Pancreas (tissue), 10 donors: ENCODE measurements at regions of chr21 and their contacts with region 1.

Region 1: GRCh38 chr21:44939532-44940115 is at the start of gene SLX9:
- DNase-seq: peak; percentile 65 to 92 (median 80)
- ATAC-seq: peak; percentile 98 to 100 (median 98)
- H3K4me3 ChIP-seq: peak within 1 kb of the TSS; percentile 90 to 98 (median 98)
- H3K27ac ChIP-seq: peak within 1 kb of the TSS in 1 of 4 donors; percentile 27
- H3K4me1 ChIP-seq: peaks cover 6 to 12% (median 6%) of the 10 kb centered on the region in 3 donors
- H3K27me3 ChIP-seq: no peaks in the 10 kb centered on the region
- CTCF ChIP-seq: no peak
- total RNA-seq, gene SLX9: 12.3 to 21.7 (median 14.5) TPM

Region 2: GRCh38 chr21:44637018-44637850 is 302.4 kb before region 1 on chr21 and contains the start of gene KRTAP10-10:
- intact Hi-C with region 1: no loop called
- DNase-seq: no peak
- ATAC-seq: no peak
- H3K4me3 ChIP-seq: no peak within 1 kb of the TSS
- H3K27ac ChIP-seq: no peak within 1 kb of the TSS
- H3K4me1 ChIP-seq: no peaks in the 10 kb centered on the region
- H3K27me3 ChIP-seq: no peaks in the 10 kb centered on the region
- CTCF ChIP-seq: no peak
- total RNA-seq, gene KRTAP10-10: not detected

Region 3: DNA sequence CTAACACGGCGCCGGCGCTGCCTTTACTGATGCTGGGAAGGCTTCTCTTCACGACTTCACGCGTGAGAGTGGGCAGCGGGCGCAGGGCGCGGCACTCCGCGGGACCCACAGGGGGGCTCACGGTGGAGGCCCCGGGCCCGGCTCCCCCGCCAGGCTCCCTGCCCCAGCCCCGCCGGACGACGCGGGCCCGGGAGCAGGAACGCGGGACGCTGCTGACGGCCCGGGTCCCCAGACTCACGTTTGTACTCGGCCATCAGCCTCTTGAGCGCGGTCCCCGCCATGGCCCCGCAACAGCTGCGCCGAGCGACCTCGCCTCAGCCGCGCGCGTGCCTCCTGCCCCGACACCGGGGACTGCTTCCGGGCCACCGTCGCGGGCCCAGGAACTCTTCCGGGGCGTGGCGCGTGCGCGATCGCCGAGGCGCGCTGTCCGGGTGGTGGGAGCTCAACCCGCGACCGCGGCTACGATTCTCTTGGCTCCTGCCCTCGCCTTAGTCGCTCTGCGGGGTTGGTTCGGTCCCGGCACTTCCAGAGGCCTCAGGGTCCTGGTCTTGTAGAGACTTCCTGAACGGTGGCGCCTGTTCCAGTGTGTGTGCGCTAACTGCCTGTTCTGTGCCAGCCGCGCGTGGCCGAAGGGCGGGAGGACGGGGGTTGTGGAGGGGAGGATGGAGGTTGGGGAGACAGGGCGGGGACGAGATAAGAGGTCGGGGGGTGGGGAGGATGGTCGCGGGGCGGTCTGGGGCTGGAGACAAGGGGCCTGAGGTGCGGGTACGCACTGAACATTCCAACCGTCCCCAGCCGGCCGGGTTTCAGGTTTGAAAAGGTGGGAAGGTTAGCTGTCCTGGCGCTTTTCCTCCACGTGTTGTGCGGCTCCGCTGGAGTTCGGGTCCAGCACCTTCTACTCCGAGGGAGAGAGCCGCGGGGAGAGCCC is 137.9 kb before region 1 on chr21 and contains the start of gene UBE2G2:
- intact Hi-C with region 1: loop called in 1 of 3 experiments (anchors 10 kb)
- DNase-seq: peak; percentile 71 to 94 (median 82)
- ATAC-seq: peak; percentile 97 to 98 (median 98)
- H3K4me3 ChIP-seq: peak within 1 kb of the TSS; percentile 70 to 99 (median 85)
- H3K27ac ChIP-seq: peak within 1 kb of the TSS; percentile 44 to 72 (median 56)
- H3K4me1 ChIP-seq: peaks cover 5 to 20% (median 10%) of the 10 kb centered on the region in 3 donors
- H3K27me3 ChIP-seq: no peaks in the 10 kb centered on the region
- CTCF ChIP-seq: no peak
- total RNA-seq, gene UBE2G2: 30.5 to 48.0 (median 39.7) TPM

Region 4: DNA sequence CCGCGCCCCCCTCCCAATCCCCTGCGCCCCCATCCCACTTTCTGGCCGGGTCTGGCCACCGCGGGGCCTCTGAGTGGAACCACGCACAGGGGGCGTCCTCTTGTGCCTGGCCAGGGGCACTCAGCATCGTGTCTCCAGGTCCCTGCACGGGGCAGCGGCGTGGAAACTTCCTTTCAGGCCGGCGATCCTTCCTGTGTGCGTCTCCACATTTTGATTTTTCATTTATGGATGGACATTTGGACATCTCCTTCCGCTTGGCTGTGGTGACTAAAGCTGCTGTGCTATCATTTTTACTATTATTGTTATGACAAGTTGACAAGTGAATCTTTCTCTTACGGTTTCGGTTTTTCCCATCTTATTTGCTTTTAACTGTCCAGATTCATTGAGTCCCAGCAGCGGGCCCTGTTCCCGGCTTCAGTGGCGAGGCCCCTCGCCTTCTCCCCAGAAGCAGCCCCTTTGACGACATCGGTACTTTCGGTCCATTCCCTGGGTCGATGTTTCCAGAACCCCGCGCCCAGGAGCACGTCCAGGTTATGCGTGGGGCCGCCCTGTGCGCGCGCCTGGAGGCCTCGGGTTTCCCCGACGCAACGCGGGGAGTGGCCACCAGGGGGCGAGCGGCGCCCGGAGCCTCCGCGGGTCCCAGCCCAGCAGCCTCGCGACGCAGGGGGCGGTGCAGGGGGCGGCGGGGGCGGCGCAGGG is 615.0 kb after region 1 on chr21:
- intact Hi-C with region 1: no loop called
- DNase-seq: peak; percentile 78 to 99 (median 87)
- ATAC-seq: peak; percentile 71 to 82 (median 76)
- H3K4me3 ChIP-seq: peak overlapping the region; percentile 2 to 50 (median 42)
- H3K27ac ChIP-seq: peak overlapping the region in 3 of 4 donors; percentile 28 to 81 (median 45)
- H3K4me1 ChIP-seq: no peaks in the 10 kb centered on the region
- H3K27me3 ChIP-seq: no peaks in the 10 kb centered on the region
- CTCF ChIP-seq: peak; percentile 71 to 80 (median 78)